Left ventricle myocardium superior (tissue), 1 donor: ENCODE measurements at regions of chr2 and their contacts with region 1.

Region 1: GRCh38 chr2:10448208-10448645 is at the start of gene ODC1:
- DNase-seq: peak; percentile 96
- ATAC-seq: peak; percentile 91
- total RNA-seq, gene ODC1: 26.4 TPM

Region 2: GRCh38 chr2:10659898-10660568 is 211.8 kb after region 1 on chr2:
- intact Hi-C with region 1: loop called (anchors 10 kb)
- DNase-seq: peak; percentile 65
- ATAC-seq: peak; percentile 86

Region 3: DNA sequence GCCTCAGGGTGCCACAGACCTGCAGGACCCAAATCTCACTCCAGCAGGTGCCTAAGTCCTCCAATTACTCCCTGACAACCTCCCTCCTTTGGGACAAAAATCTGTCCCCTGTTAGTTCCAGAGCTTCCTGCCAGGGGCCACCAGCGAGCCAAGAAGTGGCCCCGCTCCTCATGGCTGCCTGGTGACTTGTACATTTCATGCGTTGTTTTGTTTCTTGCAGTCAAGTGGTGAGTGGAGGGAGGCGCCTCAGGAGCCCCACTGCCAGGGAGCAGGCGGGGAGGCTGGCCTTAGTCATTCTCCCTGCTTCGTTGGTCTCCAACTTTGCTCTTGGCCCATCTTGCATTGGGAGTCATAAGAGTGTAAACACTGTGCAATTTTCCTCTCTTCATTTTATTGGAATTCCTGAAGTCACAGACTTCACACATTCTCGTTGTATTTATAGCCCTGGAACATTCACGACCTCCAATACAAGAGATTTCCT is 544.8 kb after region 1 on chr2:
- intact Hi-C with region 1: no loop called
- DNase-seq: no peak
- ATAC-seq: no peak